K562 (cell line): ENCODE measurements at regions of chr17 and their contacts with region 1.

Region 1: GRCh38 chr17:42527273-42527703 is 8.8 kb upstream of the NAGLU start:
- DNase-seq: peak; percentile 54 to 87 (median 68)
- ATAC-seq: peak; percentile 87
- H3K4me3 ChIP-seq: no peak overlapping the region
- H3K27ac ChIP-seq: peak overlapping the region; percentile 23; the same call in 2 of the 3 replicates
- H3K4me1 ChIP-seq: peaks cover 31 to 63% of the 10 kb centered on the region in 2 experiments
- H3K27me3 ChIP-seq: no peaks in the 10 kb centered on the region
- CTCF ChIP-seq: peak; percentile 90 to 94 (median 90)
- EP300 ChIP-seq: no peak
- POLR2A ChIP-seq: no peak
- RAD21 ChIP-seq: peak; percentile 71 to 93

Region 2: GRCh38 chr17:42422958-42423712 is 104.2 kb before region 1 on chr17 and contains the start of gene CAVIN1:
- CTCF ChIA-PET with region 1: interaction called, 5 read pairs
- POLR2A ChIA-PET with region 1: no interaction called
- in situ Hi-C with region 1: loop called (anchors 5 kb)
- intact Hi-C with region 1: loop called (anchors 1 kb)
- DNase-seq: peak; percentile 93 to 99 (median 98)
- ATAC-seq: peak; percentile 88
- H3K4me3 ChIP-seq: peak within 1 kb of the TSS; percentile 64
- H3K27ac ChIP-seq: peak within 1 kb of the TSS; percentile 71
- H3K4me1 ChIP-seq: peaks cover 21 to 33% of the 10 kb centered on the region in 2 experiments; a peak in 4 of 5 replicates
- H3K27me3 ChIP-seq: no peaks in the 10 kb centered on the region
- CTCF ChIP-seq: no peak
- EP300 ChIP-seq: no peak
- POLR2A ChIP-seq: peak; percentile 88
- RAD21 ChIP-seq: no peak
- polyA plus RNA-seq, gene CAVIN1: 6.8 to 8.6 TPM

Region 3: GRCh38 chr17:42428141-42428944 is 98.9 kb before region 1 on chr17:
- CTCF ChIA-PET with region 1: interaction called, 5 read pairs
- POLR2A ChIA-PET with region 1: no interaction called
- in situ Hi-C with region 1: loop called (anchors 5 kb)
- intact Hi-C with region 1: loop called (anchors 1 kb)
- DNase-seq: peak in 2 of 4 experiments; percentile 43 to 67
- ATAC-seq: peak; percentile 86
- H3K4me3 ChIP-seq: no peak overlapping the region
- H3K27ac ChIP-seq: no peak overlapping the region
- H3K4me1 ChIP-seq: peaks cover 7 to 10% of the 10 kb centered on the region in 2 experiments; a peak in 4 of 5 replicates
- H3K27me3 ChIP-seq: no peaks in the 10 kb centered on the region
- CTCF ChIP-seq: peak; percentile 71 to 76 (median 73)
- EP300 ChIP-seq: no peak
- POLR2A ChIP-seq: no peak
- RAD21 ChIP-seq: peak; percentile 49 to 69